T-cell (primary cell): ENCODE measurements at regions of chr2 and their contacts with region 1.

Region 1: DNA sequence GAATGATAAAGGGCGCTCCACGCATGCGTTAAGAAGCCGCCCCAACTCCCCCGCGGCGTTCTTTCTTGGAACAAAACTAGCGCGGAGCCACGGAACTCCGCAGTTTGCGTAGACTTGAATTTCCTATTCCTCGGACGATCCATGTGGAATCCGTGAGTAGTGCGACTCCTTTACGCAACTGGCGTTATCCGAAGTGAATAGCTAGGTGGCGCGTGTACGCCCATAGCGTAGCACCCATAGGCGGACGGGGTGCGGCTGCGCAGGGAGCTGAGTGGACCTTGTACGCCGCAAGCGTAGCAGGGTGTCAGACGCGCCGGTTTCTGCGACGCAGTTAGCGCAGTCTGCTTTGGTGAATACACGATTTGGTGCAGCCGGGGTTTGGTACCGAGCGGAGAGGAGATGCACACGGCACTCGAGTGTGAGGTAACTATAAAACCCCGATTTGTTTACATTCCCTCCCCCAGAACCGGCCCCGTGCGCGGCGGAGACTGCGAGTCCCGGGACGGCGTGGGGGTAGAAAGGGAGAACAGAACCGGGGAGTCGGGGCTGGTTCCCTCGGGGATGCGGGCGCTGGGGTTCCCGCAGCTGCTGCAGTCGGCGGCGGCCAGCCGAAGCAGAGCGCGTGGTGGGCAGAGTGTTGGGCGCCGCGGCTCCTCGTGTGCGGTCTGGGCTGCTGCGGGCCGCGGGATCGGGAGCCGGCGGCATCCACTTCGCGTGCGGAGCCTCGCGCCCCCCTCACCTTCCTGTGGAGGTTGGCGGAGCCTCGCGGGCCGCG is at the start of gene SLC39A10:
- DNase-seq: peak; percentile 92 to 100 (median 97)
- ATAC-seq: peak; percentile 73 to 88 (median 76)
- H3K4me3 ChIP-seq: peak within 1 kb of the TSS; percentile 73 to 89
- H3K4me3 Mint-ChIP-seq: peak within 1 kb of the TSS; percentile 87 to 99 (median 97)
- H3K27ac ChIP-seq: peak within 1 kb of the TSS; percentile 91
- H3K27ac Mint-ChIP-seq: peak within 1 kb of the TSS; percentile 100
- H3K4me1 ChIP-seq: peaks cover 12 to 14% of the 10 kb centered on the region in 2 experiments
- H3K4me1 Mint-ChIP-seq: peaks cover 26 to 49% (median 29%) of the 10 kb centered on the region in 3 donors
- H3K27me3 ChIP-seq: no peaks in the 10 kb centered on the region
- H3K27me3 Mint-ChIP-seq: peaks cover 0 to 4% of the 10 kb centered on the region in 2 donors
- total RNA-seq, gene SLC39A10: 49.8 to 81.7 (median 79.5) TPM

Region 2: GRCh38 chr2:195318440-195319111 is 338.5 kb before region 1 on chr2:
- CTCF ChIA-PET with region 1: interaction called, 3 to 13 read pairs
- POLR2A ChIA-PET with region 1: no interaction called
- DNase-seq: peak in 29 of 35 experiments; percentile 1 to 69 (median 25)
- ATAC-seq: peak in 1 of 4 experiments; percentile 36
- H3K4me3 ChIP-seq: no peak overlapping the region
- H3K4me3 Mint-ChIP-seq: no peak overlapping the region
- H3K27ac ChIP-seq: no peak overlapping the region
- H3K27ac Mint-ChIP-seq: no peak overlapping the region
- H3K4me1 ChIP-seq: peaks cover 0 to 2% of the 10 kb centered on the region in 2 experiments
- H3K4me1 Mint-ChIP-seq: peaks cover 0 to 14% (median 10%) of the 10 kb centered on the region in 3 donors
- H3K27me3 ChIP-seq: no peaks in the 10 kb centered on the region
- H3K27me3 Mint-ChIP-seq: no peaks in the 10 kb centered on the region

Region 3: DNA sequence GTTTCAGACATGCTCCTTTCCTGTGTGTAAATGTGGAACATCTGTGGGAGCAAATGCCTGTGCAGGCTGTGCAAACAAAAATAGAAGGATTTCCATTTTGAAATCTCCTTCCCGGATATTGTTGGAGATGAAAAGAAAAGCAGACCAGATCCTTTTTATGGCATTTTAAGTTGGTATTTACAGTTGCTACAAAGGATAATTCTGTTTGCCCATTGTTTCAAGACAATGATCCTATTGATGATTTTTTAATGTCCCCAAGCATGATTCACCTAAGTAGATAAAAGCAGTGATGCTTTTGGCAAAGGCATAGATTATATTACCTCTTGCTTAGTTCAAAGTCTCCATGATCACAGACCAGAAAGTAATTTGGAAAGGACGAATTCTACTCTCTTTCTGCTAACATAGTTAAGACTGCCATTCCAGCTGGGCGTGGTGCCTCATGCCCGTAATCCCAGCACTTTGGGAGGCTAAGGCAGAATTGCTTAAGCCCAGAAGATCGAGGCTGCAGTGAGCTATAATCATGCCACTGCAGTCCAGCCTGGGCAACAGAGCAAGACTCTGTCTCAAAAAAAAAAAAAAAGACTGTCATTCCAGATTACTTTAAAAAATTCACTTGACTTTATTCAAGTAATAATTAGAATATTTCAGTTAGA is 209.6 kb before region 1 on chr2:
- CTCF ChIA-PET with region 1: no interaction called
- POLR2A ChIA-PET with region 1: no interaction called
- DNase-seq: no peak
- ATAC-seq: no peak
- H3K4me3 ChIP-seq: no peak overlapping the region
- H3K4me3 Mint-ChIP-seq: no peak overlapping the region
- H3K27ac ChIP-seq: no peak overlapping the region
- H3K27ac Mint-ChIP-seq: no peak overlapping the region
- H3K4me1 ChIP-seq: no peaks in the 10 kb centered on the region
- H3K4me1 Mint-ChIP-seq: no peaks in the 10 kb centered on the region
- H3K27me3 ChIP-seq: no peaks in the 10 kb centered on the region
- H3K27me3 Mint-ChIP-seq: no peaks in the 10 kb centered on the region

Region 4: DNA sequence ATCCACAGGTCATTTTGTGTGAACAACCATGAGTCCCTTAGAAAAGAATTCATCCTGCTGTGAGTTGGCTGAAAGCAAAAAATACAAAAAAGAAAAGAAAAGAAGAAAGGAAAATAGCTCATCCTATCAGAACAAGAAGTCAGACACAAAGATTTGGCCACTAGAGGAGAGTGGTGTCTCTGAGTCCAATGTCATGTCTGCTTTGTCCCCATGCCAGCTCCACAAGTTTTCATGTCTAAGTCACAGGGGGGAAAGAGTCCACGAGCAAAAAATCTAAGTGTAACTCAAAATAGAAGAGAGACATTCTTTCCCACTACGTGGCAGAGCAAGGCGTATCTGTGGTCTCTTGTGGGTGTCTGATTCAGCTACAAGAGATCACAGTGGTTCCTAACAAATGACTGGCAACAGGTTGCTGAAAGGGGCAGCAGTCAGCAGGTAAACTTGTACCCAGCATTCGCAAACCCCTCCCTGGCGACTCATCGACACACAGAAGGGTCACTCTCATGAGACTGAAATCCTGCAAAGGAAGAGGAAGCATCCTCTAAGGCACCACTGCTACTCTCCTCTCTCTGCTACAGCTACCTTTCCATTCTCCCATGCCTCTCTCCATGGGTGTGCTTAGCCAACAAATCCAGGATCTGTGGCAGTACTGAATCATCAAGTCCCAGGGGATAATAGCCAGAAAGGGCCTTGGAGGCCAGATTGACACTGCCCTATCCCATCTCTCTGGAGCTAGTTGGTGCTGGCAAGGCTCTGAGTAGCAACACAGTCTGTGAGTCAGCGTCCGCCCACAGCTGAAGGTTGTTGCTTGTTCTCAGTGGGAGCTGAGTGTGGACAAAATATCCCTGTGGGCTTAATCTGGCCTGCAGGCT is 123.0 kb before region 1 on chr2:
- CTCF ChIA-PET with region 1: interaction called, 7 to 41 read pairs
- POLR2A ChIA-PET with region 1: interaction called in 1 of 2 experiments, 37 read pairs
- DNase-seq: peak in 32 of 35 experiments; percentile 1 to 65 (median 28)
- ATAC-seq: peak; percentile 29 to 71 (median 61)
- H3K4me3 ChIP-seq: peak overlapping the region in 1 of 2 donors; percentile 49
- H3K4me3 Mint-ChIP-seq: peak overlapping the region; percentile 82 to 84 (median 84)
- H3K27ac ChIP-seq: peak overlapping the region; percentile 80
- H3K27ac Mint-ChIP-seq: peak overlapping the region; percentile 100
- H3K4me1 ChIP-seq: peaks cover 47 to 63% of the 10 kb centered on the region in 2 experiments
- H3K4me1 Mint-ChIP-seq: peaks cover 83 to 90% (median 85%) of the 10 kb centered on the region in 3 donors
- H3K27me3 ChIP-seq: no peaks in the 10 kb centered on the region
- H3K27me3 Mint-ChIP-seq: no peaks in the 10 kb centered on the region

Region 5: GRCh38 chr2:195570329-195570728 is 86.7 kb before region 1 on chr2:
- CTCF ChIA-PET with region 1: interaction called in 1 of 2 experiments, 31 read pairs
- POLR2A ChIA-PET with region 1: interaction called in 1 of 2 experiments, 4 read pairs
- DNase-seq: no peak
- ATAC-seq: no peak
- H3K4me3 ChIP-seq: no peak overlapping the region
- H3K4me3 Mint-ChIP-seq: no peak overlapping the region
- H3K27ac ChIP-seq: no peak overlapping the region
- H3K27ac Mint-ChIP-seq: peak overlapping the region; percentile 50 to 55
- H3K4me1 ChIP-seq: peaks cover 2 to 11% of the 10 kb centered on the region in 2 experiments
- H3K4me1 Mint-ChIP-seq: peaks cover 51 to 58% (median 57%) of the 10 kb centered on the region in 3 donors
- H3K27me3 ChIP-seq: no peaks in the 10 kb centered on the region
- H3K27me3 Mint-ChIP-seq: no peaks in the 10 kb centered on the region

Region 6: DNA sequence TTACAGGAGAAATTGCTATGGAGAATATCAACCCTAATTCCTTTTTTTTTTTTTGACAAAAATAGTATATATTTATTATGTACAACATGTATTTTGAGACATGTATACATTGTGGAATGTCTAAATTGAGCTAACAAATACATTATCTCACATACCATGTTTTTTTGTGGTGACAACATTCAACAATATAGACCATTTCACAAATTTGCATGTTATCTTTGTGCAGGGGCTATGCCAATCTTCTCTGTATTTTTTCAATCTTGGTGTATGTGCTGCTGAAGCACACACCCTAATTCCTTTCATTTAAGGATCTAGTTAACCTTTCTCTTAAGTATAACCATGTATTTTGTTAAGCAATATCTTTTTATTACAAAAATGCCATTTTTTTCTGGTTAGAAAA is 13.1 kb after region 1 on chr2:
- CTCF ChIA-PET with region 1: interaction called, 5 to 12 read pairs
- POLR2A ChIA-PET with region 1: interaction called in 1 of 2 experiments, 5 read pairs
- DNase-seq: no peak
- ATAC-seq: no peak
- H3K4me3 ChIP-seq: no peak overlapping the region
- H3K4me3 Mint-ChIP-seq: no peak overlapping the region
- H3K27ac ChIP-seq: no peak overlapping the region
- H3K27ac Mint-ChIP-seq: no peak overlapping the region
- H3K4me1 ChIP-seq: peaks cover 1 to 4% of the 10 kb centered on the region in 2 experiments
- H3K4me1 Mint-ChIP-seq: peaks cover 55 to 63% (median 57%) of the 10 kb centered on the region in 3 donors
- H3K27me3 ChIP-seq: no peaks in the 10 kb centered on the region
- H3K27me3 Mint-ChIP-seq: no peaks in the 10 kb centered on the region